PC-3 (cell line): ENCODE measurements at regions of chr7 and their contacts with region 1.

Region 1: GRCh38 chr7:143305423-143306070 is 10.4 kb upstream of the CLCN1 start:
- DNase-seq: peak; percentile 85
- ATAC-seq: peak; percentile 65
- H3K4me3 ChIP-seq: no peak overlapping the region
- H3K27ac ChIP-seq: no peak overlapping the region
- H3K4me1 ChIP-seq: peaks cover 18% of the 10 kb centered on the region
- H3K27me3 ChIP-seq: no peaks in the 10 kb centered on the region
- CTCF ChIP-seq: peak; percentile 94

Region 2: DNA sequence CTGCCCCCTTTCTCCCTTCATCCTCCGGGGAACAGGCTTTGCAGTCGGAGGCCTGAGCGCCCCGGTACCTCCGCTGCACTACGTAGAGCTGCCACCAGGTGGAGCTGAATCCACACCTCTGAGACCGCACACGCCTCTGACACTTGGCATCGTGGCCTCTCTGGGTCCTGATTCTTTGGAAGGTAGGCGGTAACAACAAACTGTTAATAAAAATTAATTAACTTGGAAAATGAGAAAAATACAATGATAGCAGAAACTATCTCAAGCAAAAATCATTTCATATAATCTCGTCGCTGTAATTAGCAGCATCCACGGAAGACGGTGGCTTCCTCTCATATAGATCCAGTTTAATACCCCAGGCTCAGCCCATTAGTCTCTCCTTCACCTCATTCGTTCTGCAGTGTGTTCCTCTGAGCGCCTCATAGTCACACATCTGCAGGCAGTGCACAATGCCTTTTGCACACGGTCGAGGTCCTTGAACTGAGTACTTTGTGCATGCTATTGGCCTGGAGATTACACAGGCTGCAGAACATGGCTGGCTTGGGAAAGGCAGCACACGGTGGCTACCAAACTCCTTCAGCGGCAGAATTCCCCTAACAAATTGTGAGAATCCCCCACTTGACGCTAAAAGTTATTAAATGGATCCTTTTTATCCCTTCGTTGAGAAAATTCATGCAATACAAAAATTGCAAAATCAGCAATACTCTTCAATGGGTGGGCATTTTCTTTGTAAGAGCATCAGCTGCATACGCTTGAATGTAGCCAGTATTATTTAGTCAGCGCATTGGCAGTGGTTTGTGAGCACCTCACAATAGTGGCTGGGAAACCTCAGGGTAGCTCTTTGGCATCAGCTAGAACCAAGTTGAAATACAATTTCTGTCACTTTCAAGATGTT is 297.3 kb before region 1 on chr7:
- CTCF ChIA-PET with region 1: interaction called, 3 read pairs
- POLR2A ChIA-PET with region 1: no interaction called
- intact Hi-C with region 1: loop called (anchors 5 kb)
- DNase-seq: peak; percentile 81
- ATAC-seq: peak; percentile 84
- H3K4me3 ChIP-seq: no peak overlapping the region
- H3K27ac ChIP-seq: no peak overlapping the region
- H3K4me1 ChIP-seq: peaks cover under 1% of the 10 kb centered on the region
- H3K27me3 ChIP-seq: peaks cover 31% of the 10 kb centered on the region
- CTCF ChIP-seq: peak; percentile 87

Region 3: DNA sequence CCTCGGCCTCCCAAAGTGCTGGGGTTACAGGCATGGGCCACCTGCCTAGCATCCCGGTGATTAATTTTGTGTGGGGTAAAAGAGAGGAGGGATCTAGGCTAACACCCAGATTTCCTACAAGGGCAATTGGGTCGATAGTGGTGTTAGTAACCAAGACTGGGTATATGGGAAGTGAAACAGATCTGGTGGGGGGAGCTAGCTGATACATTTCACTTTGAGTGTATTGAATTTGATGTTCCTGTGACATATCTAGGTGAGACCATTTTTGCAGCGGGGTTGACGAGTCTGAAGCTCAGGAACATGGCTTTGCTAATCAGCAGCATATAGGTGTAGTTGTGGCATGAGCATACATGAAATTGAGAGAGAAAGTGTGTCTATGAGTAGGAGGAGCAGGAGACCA is 22.4 kb after region 1 on chr7:
- CTCF ChIA-PET with region 1: no interaction called
- POLR2A ChIA-PET with region 1: no interaction called
- intact Hi-C with region 1: no loop called
- DNase-seq: no peak
- ATAC-seq: no peak
- H3K4me3 ChIP-seq: no peak overlapping the region
- H3K27ac ChIP-seq: no peak overlapping the region
- H3K4me1 ChIP-seq: peaks cover 50% of the 10 kb centered on the region
- H3K27me3 ChIP-seq: no peaks in the 10 kb centered on the region
- CTCF ChIP-seq: no peak

Region 4: GRCh38 chr7:143372070-143372469 is 66.5 kb after region 1 on chr7:
- CTCF ChIA-PET with region 1: no interaction called
- POLR2A ChIA-PET with region 1: interaction called, 5 read pairs
- intact Hi-C with region 1: loop called (anchors 1 kb)
- DNase-seq: peak; percentile 81
- ATAC-seq: peak; percentile 19
- H3K4me3 ChIP-seq: no peak overlapping the region
- H3K27ac ChIP-seq: peak overlapping the region; percentile 42
- H3K4me1 ChIP-seq: peaks cover 50% of the 10 kb centered on the region
- H3K27me3 ChIP-seq: no peaks in the 10 kb centered on the region
- CTCF ChIP-seq: peak; percentile 52

Region 5: GRCh38 chr7:143380255-143380645 is 74.7 kb after region 1 on chr7:
- CTCF ChIA-PET with region 1: no interaction called
- POLR2A ChIA-PET with region 1: no interaction called
- intact Hi-C with region 1: loop called (anchors 2 kb)
- DNase-seq: peak; percentile 79
- ATAC-seq: peak; percentile 34
- H3K4me3 ChIP-seq: peak overlapping the region; percentile 96
- H3K27ac ChIP-seq: peak overlapping the region; percentile 95
- H3K4me1 ChIP-seq: peaks cover 55% of the 10 kb centered on the region
- H3K27me3 ChIP-seq: no peaks in the 10 kb centered on the region
- CTCF ChIP-seq: peak; percentile 87